GM12878 (cell line): ENCODE measurements at regions of chr7 and their contacts with region 1.

Region 1: DNA sequence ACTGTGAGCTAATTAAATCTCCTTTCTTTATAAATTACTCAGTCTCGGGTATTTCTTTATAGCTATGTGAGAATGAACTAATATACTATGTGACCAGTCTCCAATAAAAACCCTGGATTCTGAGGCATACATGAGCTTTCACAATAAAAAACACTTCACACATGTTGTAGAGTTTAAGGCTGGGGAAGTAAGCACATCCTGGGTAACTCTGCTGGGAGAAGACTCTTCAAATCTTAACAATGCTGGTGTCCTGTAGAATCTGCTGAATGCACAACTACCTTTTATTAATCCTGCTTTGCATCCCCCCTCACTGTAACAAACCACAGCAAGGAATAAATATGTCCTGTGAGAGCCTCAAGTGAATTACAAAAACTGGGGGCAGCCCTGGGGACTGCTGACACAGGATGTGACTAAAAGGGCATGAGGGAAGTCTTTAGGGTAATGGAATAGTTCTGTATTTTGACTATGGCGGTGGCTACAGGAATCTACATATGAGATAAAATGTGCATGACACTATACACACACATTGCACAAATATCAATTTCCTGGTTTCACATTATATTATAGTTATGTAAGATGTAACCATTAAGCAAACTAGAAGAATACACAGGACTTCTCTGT is 45.1 kb upstream of the KCTD7 start:
- DNase-seq: no peak
- ATAC-seq: no peak
- H3K4me3 ChIP-seq: no peak overlapping the region
- H3K27ac ChIP-seq: no peak overlapping the region
- H3K4me1 ChIP-seq: no peaks in the 10 kb centered on the region
- H3K27me3 ChIP-seq: no peaks in the 10 kb centered on the region
- CTCF ChIP-seq: no peak
- EP300 ChIP-seq: no peak
- POLR2A ChIP-seq: no peak
- RAD21 ChIP-seq: no peak

Region 2: DNA sequence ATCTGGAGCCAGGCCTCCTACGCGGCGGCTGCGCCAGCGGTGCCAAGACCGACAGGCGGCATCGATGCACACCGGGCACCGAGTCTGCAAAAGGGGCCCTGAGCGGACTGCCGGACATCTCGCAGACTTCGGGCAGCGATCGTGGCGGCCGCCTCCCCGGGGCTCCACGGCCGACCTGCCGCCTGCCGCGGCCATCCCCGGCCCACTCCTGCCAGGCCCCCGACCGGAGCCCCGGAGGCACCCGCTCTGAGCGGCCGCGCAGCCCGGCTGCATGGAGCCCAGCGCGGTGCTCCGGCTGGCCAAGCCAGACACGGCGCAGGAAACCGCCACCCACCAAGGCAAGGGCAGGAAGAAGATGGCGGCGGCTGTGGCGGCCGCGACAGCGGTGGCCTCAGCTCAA is 109.2 kb before region 1 on chr7:
- CTCF ChIA-PET with region 1: no interaction called
- POLR2A ChIA-PET with region 1: no interaction called
- RAD21 ChIA-PET with region 1: no interaction called
- SMC1A ChIA-PET with region 1: no interaction called
- in situ Hi-C with region 1: loop called (anchors 5 kb)
- intact Hi-C with region 1: no loop called
- DNase-seq: no peak
- ATAC-seq: no peak
- H3K4me3 ChIP-seq: no peak overlapping the region
- H3K27ac ChIP-seq: no peak overlapping the region
- H3K4me1 ChIP-seq: no peaks in the 10 kb centered on the region
- H3K27me3 ChIP-seq: no peaks in the 10 kb centered on the region
- CTCF ChIP-seq: no peak
- EP300 ChIP-seq: no peak
- POLR2A ChIP-seq: no peak
- RAD21 ChIP-seq: no peak

Region 3: GRCh38 chr7:66628361-66629140 is 45.0 kb after region 1 on chr7 and contains the start of gene KCTD7:
- CTCF ChIA-PET with region 1: no interaction called
- POLR2A ChIA-PET with region 1: no interaction called
- RAD21 ChIA-PET with region 1: no interaction called
- SMC1A ChIA-PET with region 1: no interaction called
- in situ Hi-C with region 1: no loop called
- intact Hi-C with region 1: no loop called
- DNase-seq: peak; percentile 80
- ATAC-seq: peak; percentile 94
- H3K4me3 ChIP-seq: peak within 1 kb of the TSS; percentile 88
- H3K27ac ChIP-seq: peak within 1 kb of the TSS; percentile 74
- H3K4me1 ChIP-seq: peaks cover 43% of the 10 kb centered on the region
- H3K27me3 ChIP-seq: no peaks in the 10 kb centered on the region
- CTCF ChIP-seq: no peak
- EP300 ChIP-seq: no peak
- POLR2A ChIP-seq: peak; percentile 99
- RAD21 ChIP-seq: no peak
- polyA plus RNA-seq, gene KCTD7: 1.6 TPM

Region 4: GRCh38 chr7:66740302-66740979 is 156.8 kb after region 1 on chr7 and contains the start of gene RABGEF1:
- CTCF ChIA-PET with region 1: no interaction called
- POLR2A ChIA-PET with region 1: no interaction called
- RAD21 ChIA-PET with region 1: no interaction called
- SMC1A ChIA-PET with region 1: no interaction called
- in situ Hi-C with region 1: no loop called
- intact Hi-C with region 1: loop called (anchors 10 kb)
- DNase-seq: peak; percentile 89
- ATAC-seq: peak; percentile 93
- H3K4me3 ChIP-seq: peak within 1 kb of the TSS; percentile 100
- H3K27ac ChIP-seq: peak within 1 kb of the TSS; percentile 88
- H3K4me1 ChIP-seq: peaks cover 18% of the 10 kb centered on the region
- H3K27me3 ChIP-seq: no peaks in the 10 kb centered on the region
- CTCF ChIP-seq: no peak
- EP300 ChIP-seq: 0 out of 4 replicates have a peak, but pooled peaks of 1 of the 2 experiments have one; percentile 28
- POLR2A ChIP-seq: peak; percentile 96
- RAD21 ChIP-seq: no peak
- polyA plus RNA-seq, gene RABGEF1: 10.2 to 11.8 TPM

Region 5: DNA sequence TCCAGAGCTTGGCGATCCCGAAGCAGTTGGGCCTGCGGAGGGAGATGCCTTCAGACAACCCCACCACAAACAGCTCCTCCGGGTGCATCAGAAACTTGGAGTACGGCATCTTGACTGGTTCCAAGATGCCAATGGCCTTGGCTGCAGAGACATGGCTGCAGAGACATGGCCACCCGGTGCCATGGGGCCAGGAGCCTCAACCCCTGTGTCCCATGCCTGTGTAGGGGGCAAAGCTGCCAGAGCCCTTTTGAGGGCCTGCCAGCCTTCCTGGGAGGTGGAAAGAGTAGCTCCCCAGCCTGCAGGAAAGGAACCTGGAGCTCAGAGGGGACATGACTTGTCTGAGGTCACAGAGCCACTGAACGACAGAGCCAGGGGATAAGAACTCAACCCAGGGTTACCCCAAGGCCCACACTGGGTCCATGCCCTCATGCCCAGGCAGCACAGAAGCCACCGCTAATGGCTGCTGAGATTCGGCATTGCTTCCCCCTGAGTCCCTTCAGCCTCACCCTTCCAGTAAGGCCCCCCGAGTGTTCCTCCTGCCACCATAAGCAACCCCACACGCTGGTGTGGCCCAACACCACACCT is 240.5 kb after region 1 on chr7:
- CTCF ChIA-PET with region 1: no interaction called
- POLR2A ChIA-PET with region 1: no interaction called
- RAD21 ChIA-PET with region 1: no interaction called
- SMC1A ChIA-PET with region 1: no interaction called
- in situ Hi-C with region 1: no loop called
- intact Hi-C with region 1: no loop called
- DNase-seq: no peak
- ATAC-seq: no peak
- H3K4me3 ChIP-seq: no peak overlapping the region
- H3K27ac ChIP-seq: no peak overlapping the region
- H3K4me1 ChIP-seq: no peaks in the 10 kb centered on the region
- H3K27me3 ChIP-seq: no peaks in the 10 kb centered on the region
- CTCF ChIP-seq: no peak
- EP300 ChIP-seq: no peak
- POLR2A ChIP-seq: no peak
- RAD21 ChIP-seq: no peak

Region 6: DNA sequence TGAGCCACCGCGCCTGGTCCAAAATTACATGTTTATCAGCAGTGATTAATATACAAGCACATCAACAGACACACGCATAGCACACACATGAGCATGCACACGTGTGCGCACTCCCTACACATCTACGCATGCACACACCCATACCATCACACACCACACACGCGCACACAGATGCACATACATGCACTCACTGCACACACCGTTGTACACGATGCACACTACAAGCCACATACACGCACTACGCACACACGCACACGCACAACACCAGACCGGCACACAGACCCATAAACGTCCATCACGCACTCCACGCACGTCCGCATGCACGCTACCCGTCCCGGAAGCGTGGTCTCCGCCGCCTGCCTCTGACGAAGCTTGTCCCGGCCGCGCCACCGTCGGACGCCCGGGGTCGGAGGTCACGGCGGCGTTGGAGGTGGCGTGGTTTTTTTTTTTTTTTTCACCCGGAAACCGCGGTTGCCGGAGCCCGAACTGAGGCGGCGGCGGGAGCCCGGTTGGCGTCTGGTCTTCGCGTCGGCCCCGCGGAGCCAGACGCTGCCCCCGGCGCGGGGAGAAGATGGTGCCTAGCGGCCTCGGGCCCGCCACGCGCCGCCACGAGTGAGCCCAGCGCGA is 337.3 kb after region 1 on chr7 and contains the start of gene TMEM248:
- CTCF ChIA-PET with region 1: no interaction called
- POLR2A ChIA-PET with region 1: no interaction called
- RAD21 ChIA-PET with region 1: no interaction called
- SMC1A ChIA-PET with region 1: no interaction called
- in situ Hi-C with region 1: no loop called
- intact Hi-C with region 1: no loop called
- DNase-seq: peak; percentile 85
- ATAC-seq: peak; percentile 88
- H3K4me3 ChIP-seq: peak within 1 kb of the TSS; percentile 84
- H3K27ac ChIP-seq: peak within 1 kb of the TSS; percentile 80
- H3K4me1 ChIP-seq: peaks cover 11% of the 10 kb centered on the region
- H3K27me3 ChIP-seq: no peaks in the 10 kb centered on the region
- CTCF ChIP-seq: no peak
- EP300 ChIP-seq: no peak
- POLR2A ChIP-seq: peak; percentile 97
- RAD21 ChIP-seq: no peak
- polyA plus RNA-seq, gene TMEM248: 6.3 to 10.5 TPM